ENCODE measurements at regions of chr6 and their contacts with region 1.

Region 1: GRCh38 chr6:72411872-72412708 is 209.8 kb upstream of the KCNQ5 start:
- DNase-seq: peak; percentile 71
- H3K4me3 Mint-ChIP-seq: no peak overlapping the region
- H3K27ac Mint-ChIP-seq: no peak overlapping the region
- H3K4me1 Mint-ChIP-seq: no peaks in the 10 kb centered on the region
- H3K27me3 Mint-ChIP-seq: peaks cover 14% of the 10 kb centered on the region

Region 2: GRCh38 chr6:72382602-72383529 is 29.2 kb before region 1 on chr6:
- intact Hi-C with region 1: no loop called
- DNase-seq: no peak
- H3K4me3 Mint-ChIP-seq: no peak overlapping the region
- H3K27ac Mint-ChIP-seq: no peak overlapping the region
- H3K4me1 Mint-ChIP-seq: no peaks in the 10 kb centered on the region
- H3K27me3 Mint-ChIP-seq: peaks cover 2% of the 10 kb centered on the region

Region 3: DNA sequence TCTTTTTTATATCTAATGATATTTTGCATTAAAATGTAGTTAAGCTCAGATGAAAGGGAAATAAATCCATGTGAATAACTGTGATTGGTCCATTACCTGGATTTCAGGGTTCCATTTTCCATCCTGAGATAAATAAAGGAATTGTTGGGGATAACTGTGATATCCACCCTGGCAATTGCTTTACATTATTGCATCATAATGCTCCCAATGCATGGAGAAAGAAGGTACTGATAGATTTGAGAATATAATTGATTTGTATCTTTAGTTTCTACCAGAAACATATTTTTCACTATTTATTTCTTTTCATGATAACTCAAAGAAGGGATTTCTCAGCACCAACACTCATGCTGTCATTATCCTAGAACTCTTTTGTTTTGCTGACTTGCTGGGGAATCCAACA is 107.8 kb after region 1 on chr6:
- intact Hi-C with region 1: loop called (anchors 10 kb)
- DNase-seq: no peak
- H3K4me3 Mint-ChIP-seq: no peak overlapping the region
- H3K27ac Mint-ChIP-seq: no peak overlapping the region
- H3K4me1 Mint-ChIP-seq: no peaks in the 10 kb centered on the region
- H3K27me3 Mint-ChIP-seq: peaks cover 8% of the 10 kb centered on the region

Region 4: GRCh38 chr6:72580281-72580940 is 168.3 kb after region 1 on chr6:
- intact Hi-C with region 1: loop called (anchors 10 kb)
- DNase-seq: no peak
- H3K4me3 Mint-ChIP-seq: no peak overlapping the region
- H3K27ac Mint-ChIP-seq: no peak overlapping the region
- H3K4me1 Mint-ChIP-seq: peaks cover 6% of the 10 kb centered on the region
- H3K27me3 Mint-ChIP-seq: peaks cover 6% of the 10 kb centered on the region

Region 5: GRCh38 chr6:73129653-73130443 is 717.8 kb after region 1 on chr6:
- intact Hi-C with region 1: loop called (anchors 1 kb)
- DNase-seq: peak; percentile 70
- H3K4me3 Mint-ChIP-seq: no peak overlapping the region
- H3K27ac Mint-ChIP-seq: no peak overlapping the region
- H3K4me1 Mint-ChIP-seq: peaks cover 5% of the 10 kb centered on the region
- H3K27me3 Mint-ChIP-seq: peaks cover 9% of the 10 kb centered on the region

Region 6: GRCh38 chr6:73180763-73181619 is 768.9 kb after region 1 on chr6:
- intact Hi-C with region 1: loop called (anchors 1 kb)
- DNase-seq: no peak
- H3K4me3 Mint-ChIP-seq: no peak overlapping the region
- H3K27ac Mint-ChIP-seq: no peak overlapping the region
- H3K4me1 Mint-ChIP-seq: peaks cover 4% of the 10 kb centered on the region
- H3K27me3 Mint-ChIP-seq: no peaks in the 10 kb centered on the region

Region 7: GRCh38 chr6:73329201-73329600 is 917.1 kb after region 1 on chr6:
- intact Hi-C with region 1: loop called (anchors 5 kb)
- DNase-seq: no peak
- H3K4me3 Mint-ChIP-seq: no peak overlapping the region
- H3K27ac Mint-ChIP-seq: no peak overlapping the region
- H3K4me1 Mint-ChIP-seq: peaks cover 7% of the 10 kb centered on the region
- H3K27me3 Mint-ChIP-seq: peaks cover 35% of the 10 kb centered on the region

Measured in activated T-helper 2 cell treated with anti-CD3 and anti-CD28 coated beads, Interferon-gamma antibody, Interleukin-2, Interleukin-4, amounts not matched to agents 10 μg/mL and 5 μg/mL and 100 μg/mL, durations not matched to agents 14 hours and 24 hours and 36 hours (primary cell).